ENCODE measurements at regions of chr3 and their contacts with region 1.

Region 1: GRCh38 chr3:44198284-44199269 is 43.1 kb upstream of the TOPAZ1 start:
- DNase-seq: peak; percentile 67
- ATAC-seq: peak; percentile 95
- H3K4me3 ChIP-seq: no peak overlapping the region
- H3K27ac ChIP-seq: no peak overlapping the region
- H3K4me1 ChIP-seq: no peaks in the 10 kb centered on the region
- H3K27me3 ChIP-seq: peaks cover 4% of the 10 kb centered on the region
- CTCF ChIP-seq: peak; percentile 86
- POLR2A ChIP-seq: no peak
- RAD21 ChIP-seq: peak; percentile 90

Region 2: GRCh38 chr3:43162230-43163084 is 1036.1 kb before region 1 on chr3:
- CTCF ChIA-PET with region 1: no interaction called
- POLR2A ChIA-PET with region 1: no interaction called
- dilution Hi-C with region 1: no loop called
- in situ Hi-C with region 1: no loop called
- intact Hi-C with region 1: loop called (anchors 1 kb)
- DNase-seq: peak; percentile 78
- ATAC-seq: peak; percentile 84
- H3K4me3 ChIP-seq: no peak overlapping the region
- H3K27ac ChIP-seq: no peak overlapping the region
- H3K4me1 ChIP-seq: peaks cover 2% of the 10 kb centered on the region; the same call in 1 of the 2 replicates
- H3K27me3 ChIP-seq: no peaks in the 10 kb centered on the region
- CTCF ChIP-seq: peak; percentile 62
- POLR2A ChIP-seq: no peak
- RAD21 ChIP-seq: peak; percentile 73

Region 3: DNA sequence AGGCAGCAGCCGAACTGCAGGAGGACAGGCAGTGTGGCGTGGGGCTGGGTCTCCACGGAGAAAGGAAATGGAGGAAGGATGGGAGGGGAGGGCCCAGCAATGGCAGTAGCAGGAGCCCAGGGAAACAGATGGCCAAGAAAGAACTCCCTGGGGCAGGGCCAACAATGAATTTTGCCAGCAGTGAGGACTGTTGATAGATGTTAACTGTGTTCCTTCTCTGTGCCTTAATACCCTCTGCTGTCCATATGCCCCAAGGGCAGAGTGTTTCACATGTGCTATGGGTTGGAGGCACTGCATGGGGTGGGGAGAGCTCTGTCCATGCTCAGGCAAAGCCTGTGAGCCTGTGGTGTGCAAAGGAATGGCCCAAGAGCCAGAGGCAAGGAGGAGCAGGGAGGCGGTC is 1021.9 kb before region 1 on chr3:
- CTCF ChIA-PET with region 1: no interaction called
- POLR2A ChIA-PET with region 1: no interaction called
- dilution Hi-C with region 1: no loop called
- in situ Hi-C with region 1: no loop called
- intact Hi-C with region 1: no loop called
- DNase-seq: no peak
- ATAC-seq: no peak
- H3K4me3 ChIP-seq: no peak overlapping the region
- H3K27ac ChIP-seq: no peak overlapping the region
- H3K4me1 ChIP-seq: peaks cover 18% of the 10 kb centered on the region
- H3K27me3 ChIP-seq: no peaks in the 10 kb centered on the region
- CTCF ChIP-seq: no peak
- POLR2A ChIP-seq: no peak
- RAD21 ChIP-seq: no peak

Region 4: GRCh38 chr3:43540624-43541023 is 658.0 kb before region 1 on chr3:
- CTCF ChIA-PET with region 1: no interaction called
- POLR2A ChIA-PET with region 1: no interaction called
- dilution Hi-C with region 1: no loop called
- in situ Hi-C with region 1: loop called (anchors 10 kb)
- intact Hi-C with region 1: loop called (anchors 1 kb)
- DNase-seq: peak; percentile 58
- ATAC-seq: peak; percentile 95
- H3K4me3 ChIP-seq: no peak overlapping the region
- H3K27ac ChIP-seq: peak overlapping the region; percentile 63; the same call in 1 of the 2 replicates
- H3K4me1 ChIP-seq: peaks cover 7% of the 10 kb centered on the region
- H3K27me3 ChIP-seq: no peaks in the 10 kb centered on the region
- CTCF ChIP-seq: no peak
- POLR2A ChIP-seq: no peak
- RAD21 ChIP-seq: no peak

Region 5: GRCh38 chr3:43769471-43770425 is 428.8 kb before region 1 on chr3:
- CTCF ChIA-PET with region 1: interaction called, 3 read pairs
- POLR2A ChIA-PET with region 1: no interaction called
- dilution Hi-C with region 1: no loop called
- in situ Hi-C with region 1: loop called (anchors 10 kb)
- intact Hi-C with region 1: loop called (anchors 1 kb)
- DNase-seq: peak; percentile 91
- ATAC-seq: peak; percentile 97
- H3K4me3 ChIP-seq: no peak overlapping the region
- H3K27ac ChIP-seq: no peak overlapping the region
- H3K4me1 ChIP-seq: peaks cover 31% of the 10 kb centered on the region
- H3K27me3 ChIP-seq: no peaks in the 10 kb centered on the region
- CTCF ChIP-seq: peak; percentile 92
- POLR2A ChIP-seq: no peak
- RAD21 ChIP-seq: peak; percentile 77